Pancreas (tissue), 10 donors: ENCODE measurements at regions of chr13 and their contacts with region 1.

Region 1: DNA sequence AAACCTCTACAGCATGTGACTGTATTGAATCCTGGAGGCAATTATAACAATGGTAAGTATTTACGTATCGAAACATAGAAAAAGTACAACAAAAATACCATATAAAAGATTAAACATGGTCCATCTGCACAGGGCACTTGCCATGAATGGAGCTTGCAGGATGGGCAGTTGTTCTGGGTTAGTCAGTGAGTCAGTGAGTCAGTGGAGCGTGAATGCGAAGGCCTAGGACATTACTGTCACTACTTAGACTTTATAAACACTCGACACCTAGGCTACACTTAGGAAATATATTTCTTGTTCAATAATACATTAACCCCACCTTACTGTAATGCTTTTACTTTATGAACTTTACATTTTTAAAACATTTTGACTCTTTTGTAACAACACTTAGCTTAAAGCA is 35.6 kb upstream of the TMTC4 start:
- DNase-seq: no peak
- ATAC-seq: no peak
- H3K4me3 ChIP-seq: no peak overlapping the region
- H3K27ac ChIP-seq: no peak overlapping the region
- H3K4me1 ChIP-seq: no peaks in the 10 kb centered on the region
- H3K27me3 ChIP-seq: no peaks in the 10 kb centered on the region
- CTCF ChIP-seq: no peak

Region 2: DNA sequence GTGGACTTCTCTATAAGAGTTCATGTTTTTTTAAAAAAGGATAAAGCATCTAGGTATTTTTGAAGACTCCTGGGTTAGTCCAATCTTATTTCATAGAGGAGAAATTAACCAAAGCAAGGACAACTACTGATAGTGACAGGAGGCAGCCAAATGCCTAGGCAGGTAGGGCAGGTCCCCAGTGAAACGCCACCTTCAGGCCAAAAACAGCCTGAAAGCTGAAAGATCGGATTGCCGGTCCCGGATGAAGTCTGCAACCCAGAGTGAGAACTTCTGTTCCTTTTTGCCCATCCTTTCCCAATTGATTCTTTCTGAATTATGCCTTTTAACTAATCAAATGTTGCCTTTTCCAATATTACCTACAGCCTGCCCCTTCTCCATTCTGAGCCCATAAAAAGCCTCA is 115.4 kb before region 1 on chr13:
- intact Hi-C with region 1: no loop called
- DNase-seq: peak in 5 of 6 donors; percentile 37 to 69 (median 53)
- ATAC-seq: peak; percentile 77 to 92 (median 85)
- H3K4me3 ChIP-seq: no peak overlapping the region
- H3K27ac ChIP-seq: no peak overlapping the region
- H3K4me1 ChIP-seq: no peaks in the 10 kb centered on the region
- H3K27me3 ChIP-seq: no peaks in the 10 kb centered on the region
- CTCF ChIP-seq: peak in 3 of 4 donors; percentile 17 to 35 (median 27)

Region 3: DNA sequence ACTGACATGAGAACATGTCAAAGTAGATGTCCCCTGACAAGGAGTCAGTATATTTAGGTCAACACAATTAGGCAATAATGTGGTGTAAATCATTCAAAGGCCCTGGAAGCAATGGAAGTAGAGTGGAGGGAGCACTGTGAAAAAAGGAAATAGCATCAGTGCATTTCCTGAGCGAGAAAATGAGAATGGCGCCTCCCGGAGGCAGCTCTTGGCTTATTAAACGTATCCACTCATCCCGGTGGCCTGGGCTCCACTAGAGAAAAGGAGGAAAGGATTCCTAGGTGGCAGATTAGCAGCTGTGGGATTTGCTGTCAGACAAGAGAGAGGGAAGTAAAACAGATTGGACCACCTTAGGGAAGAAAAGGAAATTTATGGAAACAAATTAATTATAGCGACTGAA is 138.1 kb after region 1 on chr13:
- intact Hi-C with region 1: no loop called
- DNase-seq: no peak
- ATAC-seq: no peak
- H3K4me3 ChIP-seq: no peak overlapping the region
- H3K27ac ChIP-seq: no peak overlapping the region
- H3K4me1 ChIP-seq: no peaks in the 10 kb centered on the region
- H3K27me3 ChIP-seq: no peaks in the 10 kb centered on the region
- CTCF ChIP-seq: no peak

Region 4: GRCh38 chr13:100887729-100888156 is 177.6 kb after region 1 on chr13:
- intact Hi-C with region 1: no loop called
- DNase-seq: no peak
- ATAC-seq: peak in 3 of 4 donors; percentile 29 to 43 (median 35)
- H3K4me3 ChIP-seq: no peak overlapping the region
- H3K27ac ChIP-seq: no peak overlapping the region
- H3K4me1 ChIP-seq: no peaks in the 10 kb centered on the region
- H3K27me3 ChIP-seq: no peaks in the 10 kb centered on the region
- CTCF ChIP-seq: no peak

Region 5: DNA sequence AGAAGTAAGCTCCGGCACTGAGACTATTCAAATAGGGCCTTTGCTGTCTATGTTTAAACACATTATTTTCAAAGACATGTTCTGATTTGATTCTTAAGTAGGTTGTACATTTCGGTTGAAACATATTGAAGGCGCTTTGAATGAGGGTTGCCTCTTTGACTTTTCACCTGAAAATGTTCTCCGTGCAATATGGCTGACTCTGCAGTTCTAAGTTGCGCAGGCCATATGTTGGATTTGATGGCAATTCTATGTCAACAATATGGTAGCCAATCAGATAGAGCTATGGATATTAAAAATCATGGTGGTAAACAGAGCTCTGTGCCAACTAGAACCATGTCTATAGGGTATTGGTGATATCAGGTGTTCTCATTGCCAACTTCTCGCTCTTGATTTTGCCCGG is 398.8 kb after region 1 on chr13:
- intact Hi-C with region 1: loop called in 1 of 3 experiments (anchors 10 kb)
- DNase-seq: no peak
- ATAC-seq: no peak
- H3K4me3 ChIP-seq: no peak overlapping the region
- H3K27ac ChIP-seq: no peak overlapping the region
- H3K4me1 ChIP-seq: no peaks in the 10 kb centered on the region
- H3K27me3 ChIP-seq: no peaks in the 10 kb centered on the region
- CTCF ChIP-seq: no peak